Sciatic nerve (tissue), 2 donors: ENCODE measurements at regions of chr12 and their contacts with region 1.

Region 1: DNA sequence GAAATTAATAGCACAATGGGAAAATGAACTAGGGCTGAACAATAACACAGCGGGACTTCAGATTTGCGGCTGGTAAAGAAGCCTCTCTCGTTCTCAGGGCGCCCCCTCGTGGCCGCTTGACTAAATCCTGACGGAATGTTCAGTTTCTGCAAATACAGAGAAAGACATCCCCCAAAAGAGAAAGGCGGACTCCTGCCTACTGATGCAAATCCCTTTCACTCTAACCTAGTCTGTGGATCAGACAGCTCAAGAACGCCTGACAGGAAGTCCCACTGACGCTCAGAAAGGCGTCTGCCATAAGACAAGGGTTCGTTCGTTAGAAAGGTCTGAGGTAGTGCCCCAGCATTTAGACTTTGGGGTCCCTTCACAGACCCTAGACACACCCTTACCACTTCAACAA is 2.5 kb downstream of the NUAK1 start:
- DNase-seq: peak; percentile 97
- ATAC-seq: peak; percentile 74

Region 2: DNA sequence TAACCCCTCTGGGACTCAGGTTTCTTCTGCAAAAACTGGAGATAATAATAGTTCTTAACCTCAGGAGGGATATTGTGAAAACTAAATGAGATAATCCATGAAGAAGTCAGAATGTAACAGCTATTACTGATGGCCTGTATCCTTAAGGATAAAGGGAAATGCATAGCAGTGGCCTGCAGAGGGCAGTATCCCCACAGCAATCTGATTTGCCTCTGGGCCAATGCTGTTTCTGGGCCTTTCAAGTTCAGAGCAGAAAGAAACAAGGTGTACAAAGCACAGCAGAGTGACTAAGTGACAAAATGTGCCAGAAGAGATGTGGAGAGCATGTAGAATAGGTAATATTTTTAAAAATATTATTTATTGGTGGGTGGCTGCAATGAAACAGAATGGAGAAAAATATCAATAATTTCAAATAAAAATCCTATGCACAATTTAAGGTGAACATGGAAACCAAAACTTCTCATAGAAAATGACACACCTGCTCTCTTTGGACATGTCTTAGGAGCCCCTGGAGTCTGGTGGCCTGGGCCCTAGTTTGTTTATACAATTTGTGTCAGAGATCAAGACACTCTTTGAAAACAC is 715.5 kb before region 1 on chr12:
- intact Hi-C with region 1: loop called (anchors 10 kb)
- DNase-seq: peak; percentile 88
- ATAC-seq: peak; percentile 94

Region 3: GRCh38 chr12:105705765-105706164 is 430.5 kb before region 1 on chr12:
- intact Hi-C with region 1: loop called (anchors 5 kb)
- DNase-seq: peak; percentile 73
- ATAC-seq: peak; percentile 62